ENCODE measurements at regions of chr4 and their contacts with region 1.

Region 1: DNA sequence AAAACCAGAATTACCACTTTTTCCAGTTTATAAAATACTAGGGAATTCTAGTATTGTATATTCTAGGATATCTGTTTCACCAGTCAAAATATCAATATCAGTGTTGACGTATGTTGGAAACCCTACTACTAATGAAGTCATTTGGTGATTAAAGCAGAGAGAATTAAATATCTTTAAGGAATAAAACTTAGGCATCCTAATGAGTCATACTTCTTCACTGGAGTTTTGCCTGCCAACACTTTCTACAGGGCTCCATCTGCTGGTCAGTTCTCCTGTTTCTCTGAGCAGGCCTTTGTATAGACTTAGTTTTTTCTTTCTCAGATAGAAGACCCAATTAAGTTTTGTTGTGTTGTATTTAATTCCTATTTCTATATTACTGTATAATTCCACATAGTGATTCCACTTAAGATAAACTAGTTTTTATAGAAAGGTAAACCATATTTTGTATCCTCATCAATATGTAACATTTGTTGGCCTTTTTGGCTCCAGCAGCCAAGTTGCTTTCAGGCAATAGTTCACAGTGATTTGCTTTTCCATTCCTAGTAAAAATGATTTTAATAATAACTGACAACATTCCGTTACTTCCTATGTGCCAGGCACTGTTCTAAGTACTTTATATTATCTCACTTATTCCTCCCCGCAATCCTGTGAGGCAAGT is 3.5 kb downstream of the AP1AR start:
- DNase-seq: peak in 3 of 4 donors; percentile 52 to 73 (median 53)
- ATAC-seq: no peak
- H3K4me3 ChIP-seq: no peak overlapping the region
- H3K27ac ChIP-seq: no peak overlapping the region
- H3K4me1 ChIP-seq: peaks cover 0 to 25% of the 10 kb centered on the region in 2 donors
- H3K27me3 ChIP-seq: no peaks in the 10 kb centered on the region
- CTCF ChIP-seq: peak; percentile 74 to 76

Region 2: GRCh38 chr4:112099701-112100297 is 135.3 kb before region 1 on chr4:
- intact Hi-C with region 1: loop called in 1 of 2 experiments (anchors 5 kb)
- DNase-seq: peak in 2 of 4 donors; percentile 35 to 59
- ATAC-seq: peak; percentile 88
- H3K4me3 ChIP-seq: no peak overlapping the region
- H3K27ac ChIP-seq: no peak overlapping the region
- H3K4me1 ChIP-seq: no peaks in the 10 kb centered on the region
- H3K27me3 ChIP-seq: no peaks in the 10 kb centered on the region
- CTCF ChIP-seq: peak; percentile 39 to 71